ENCODE measurements at regions of chr9 and their contacts with region 1.

Region 1: DNA sequence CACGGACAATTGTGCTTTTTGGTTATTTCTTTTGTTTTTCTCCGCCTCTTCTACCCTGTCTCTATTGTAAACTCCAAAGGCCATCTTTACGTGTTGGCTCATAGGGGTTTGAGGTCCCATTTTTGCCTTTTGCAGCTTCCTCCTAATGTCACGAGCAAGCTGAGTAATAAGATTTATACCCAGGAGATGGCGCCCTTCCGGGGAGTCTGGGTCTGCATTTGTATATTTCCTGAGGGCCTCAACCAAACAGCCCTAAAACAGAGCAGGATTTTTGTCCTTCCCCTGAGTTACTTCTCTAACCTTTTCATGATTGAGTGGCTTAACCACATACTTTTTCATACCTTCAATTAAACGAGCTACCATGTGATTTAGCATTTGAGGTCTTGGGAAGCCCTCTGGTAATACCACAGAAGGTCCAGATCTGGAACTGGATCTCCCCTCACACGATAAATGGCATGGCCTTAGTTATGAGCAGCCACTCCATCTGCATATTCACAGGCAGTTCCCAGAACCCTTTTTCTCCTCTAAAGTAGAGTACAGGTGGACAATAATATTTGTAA is 11.2 kb upstream of the CFAP95 start:
- DNase-seq: peak; percentile 61
- ATAC-seq: no peak
- H3K4me3 Mint-ChIP-seq: no peak overlapping the region
- H3K27ac Mint-ChIP-seq: peak overlapping the region; percentile 5
- H3K4me1 Mint-ChIP-seq: peaks cover 30% of the 10 kb centered on the region
- H3K27me3 Mint-ChIP-seq: peaks cover 2% of the 10 kb centered on the region

Region 2: GRCh38 chr9:69768716-69769115 is 40.7 kb before region 1 on chr9:
- CTCF ChIA-PET with region 1: no interaction called
- POLR2A ChIA-PET with region 1: no interaction called
- DNase-seq: no peak
- ATAC-seq: no peak
- H3K4me3 Mint-ChIP-seq: no peak overlapping the region
- H3K27ac Mint-ChIP-seq: no peak overlapping the region
- H3K4me1 Mint-ChIP-seq: no peaks in the 10 kb centered on the region
- H3K27me3 Mint-ChIP-seq: no peaks in the 10 kb centered on the region

Region 3: GRCh38 chr9:69834591-69835184 is 25.3 kb after region 1 on chr9:
- CTCF ChIA-PET with region 1: interaction called, 22 read pairs
- POLR2A ChIA-PET with region 1: no interaction called
- DNase-seq: no peak
- ATAC-seq: peak; percentile 91
- H3K4me3 Mint-ChIP-seq: peak overlapping the region; percentile 62
- H3K27ac Mint-ChIP-seq: peak overlapping the region; percentile 70
- H3K4me1 Mint-ChIP-seq: peaks cover 49% of the 10 kb centered on the region
- H3K27me3 Mint-ChIP-seq: no peaks in the 10 kb centered on the region

Region 4: DNA sequence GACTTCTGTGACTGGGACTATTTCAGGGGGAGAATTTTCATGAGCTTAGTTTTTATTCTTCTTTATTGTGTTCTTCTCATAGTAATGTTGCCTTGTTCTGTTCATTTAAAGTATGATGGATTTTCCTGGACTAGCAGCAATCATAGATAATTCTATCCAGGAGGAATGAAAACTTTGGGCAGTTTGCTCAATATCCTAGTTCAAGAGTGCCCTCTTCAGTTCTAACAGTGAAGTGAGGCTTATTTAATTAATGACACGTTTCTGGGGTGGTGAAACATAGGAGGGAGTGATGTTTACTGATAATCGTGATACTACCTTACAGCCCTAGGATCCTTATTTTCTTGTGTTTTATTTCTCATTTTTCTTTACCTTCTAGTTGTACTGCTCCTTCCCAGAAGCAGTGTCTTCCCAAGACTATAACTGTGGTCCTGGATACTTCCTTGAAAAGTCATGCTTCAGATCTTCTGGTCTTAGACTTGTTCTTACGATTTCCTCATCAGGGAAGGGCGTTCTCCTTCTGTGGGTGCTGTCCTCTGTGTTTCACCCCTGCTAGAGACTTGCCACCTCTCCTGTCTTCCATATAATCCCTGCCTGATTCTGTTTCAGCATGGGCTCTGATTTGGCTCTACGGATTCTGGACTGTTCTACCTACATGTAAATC is 68.6 kb after region 1 on chr9:
- CTCF ChIA-PET with region 1: interaction called, 13 read pairs
- POLR2A ChIA-PET with region 1: no interaction called
- DNase-seq: no peak
- ATAC-seq: no peak
- H3K4me3 Mint-ChIP-seq: no peak overlapping the region
- H3K27ac Mint-ChIP-seq: no peak overlapping the region
- H3K4me1 Mint-ChIP-seq: no peaks in the 10 kb centered on the region
- H3K27me3 Mint-ChIP-seq: peaks cover 8% of the 10 kb centered on the region